Activated CD4-positive, alpha-beta memory T cell treated with anti-CD3 and anti-CD28 coated beads, Interleukin-2, amount 10 ng/mL, durations not matched to agents 7 days and 5 days (primary cell): ENCODE measurements at regions of chr7 and their contacts with region 1.

Region 1: DNA sequence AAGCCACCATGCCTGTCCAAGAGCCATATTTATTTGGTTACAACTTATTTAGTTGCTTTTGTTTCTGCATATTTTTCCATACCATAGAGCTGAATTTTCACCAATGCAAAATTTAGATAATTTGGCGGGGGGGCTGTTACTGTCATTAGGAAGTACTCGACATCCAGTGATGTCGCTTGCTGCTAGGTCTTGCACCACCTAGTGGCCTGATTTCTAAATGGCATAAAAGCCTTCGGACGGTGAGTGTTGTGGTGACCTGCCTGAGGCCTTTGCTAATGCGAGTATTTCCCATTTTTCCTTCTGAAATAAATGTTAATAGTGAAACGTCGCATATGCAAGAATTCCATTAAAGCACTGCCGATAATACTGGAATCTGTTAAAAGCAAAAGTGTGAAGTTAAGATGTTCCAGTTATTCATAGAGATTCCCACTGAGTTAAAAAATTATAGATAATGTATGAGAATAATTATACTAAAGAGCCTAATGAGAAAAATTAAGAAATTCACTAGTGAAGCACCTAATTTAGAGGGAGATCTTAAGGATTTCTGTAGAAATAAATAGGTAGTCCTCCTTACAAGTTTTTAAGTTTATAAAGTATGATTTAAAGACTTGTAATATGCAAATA is 86.1 kb upstream of the DNAJB6 start:
- DNase-seq: peak; percentile 53
- H3K4me3 Mint-ChIP-seq: no peak overlapping the region
- H3K27ac Mint-ChIP-seq: no peak overlapping the region
- H3K4me1 Mint-ChIP-seq: peaks cover 3% of the 10 kb centered on the region
- H3K27me3 Mint-ChIP-seq: no peaks in the 10 kb centered on the region

Region 2: GRCh38 chr7:156668181-156668624 is 582.5 kb before region 1 on chr7:
- CTCF ChIA-PET with region 1: no interaction called
- POLR2A ChIA-PET with region 1: no interaction called
- DNase-seq: no peak
- H3K4me3 Mint-ChIP-seq: no peak overlapping the region
- H3K27ac Mint-ChIP-seq: no peak overlapping the region
- H3K4me1 Mint-ChIP-seq: no peaks in the 10 kb centered on the region
- H3K27me3 Mint-ChIP-seq: no peaks in the 10 kb centered on the region

Region 3: DNA sequence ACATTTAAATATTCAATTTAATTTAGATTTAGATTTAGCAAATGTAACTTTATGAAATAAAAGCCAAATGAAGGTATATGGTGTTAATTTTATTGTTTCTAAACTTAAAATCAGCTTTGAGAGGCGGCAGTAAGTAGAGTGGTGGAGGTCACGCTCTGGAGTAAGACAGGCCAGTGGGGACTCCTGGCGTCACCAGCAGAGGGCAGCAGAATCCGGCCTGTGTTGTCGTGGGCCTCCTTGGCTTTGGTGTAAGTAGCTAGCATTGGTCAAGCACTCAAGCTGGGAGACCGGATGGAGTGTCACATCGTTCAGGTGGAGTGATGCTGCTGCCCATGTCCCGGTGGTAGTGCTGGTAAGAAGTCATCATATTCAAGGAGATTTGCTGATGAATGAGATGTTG is 12.6 kb before region 1 on chr7:
- CTCF ChIA-PET with region 1: interaction called, 22 read pairs
- POLR2A ChIA-PET with region 1: interaction called, 3 read pairs
- DNase-seq: no peak
- H3K4me3 Mint-ChIP-seq: no peak overlapping the region
- H3K27ac Mint-ChIP-seq: no peak overlapping the region
- H3K4me1 Mint-ChIP-seq: peaks cover 9% of the 10 kb centered on the region
- H3K27me3 Mint-ChIP-seq: no peaks in the 10 kb centered on the region

Region 4: DNA sequence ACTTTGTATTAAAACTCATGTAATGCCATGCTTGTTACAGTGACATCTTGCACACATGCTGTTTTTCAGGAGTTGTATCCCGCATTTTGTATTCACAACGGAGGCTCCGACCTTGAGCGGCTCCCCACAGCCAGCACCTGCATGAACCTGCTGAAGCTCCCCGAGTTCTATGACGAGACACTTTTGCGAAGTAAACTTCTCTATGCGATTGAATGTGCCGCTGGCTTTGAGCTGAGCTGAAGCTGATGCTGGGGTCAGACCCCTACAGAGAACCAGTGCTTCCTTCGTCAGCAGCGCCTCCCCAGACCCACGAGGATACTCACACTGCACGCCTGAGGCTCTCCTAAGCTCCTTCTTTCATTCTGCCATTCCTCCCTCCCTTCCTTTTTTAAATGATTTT is 16.8 kb after region 1 on chr7:
- CTCF ChIA-PET with region 1: interaction called, 10 read pairs
- POLR2A ChIA-PET with region 1: interaction called, 3 read pairs
- DNase-seq: no peak
- H3K4me3 Mint-ChIP-seq: no peak overlapping the region
- H3K27ac Mint-ChIP-seq: no peak overlapping the region
- H3K4me1 Mint-ChIP-seq: peaks cover 19% of the 10 kb centered on the region
- H3K27me3 Mint-ChIP-seq: no peaks in the 10 kb centered on the region

Region 5: DNA sequence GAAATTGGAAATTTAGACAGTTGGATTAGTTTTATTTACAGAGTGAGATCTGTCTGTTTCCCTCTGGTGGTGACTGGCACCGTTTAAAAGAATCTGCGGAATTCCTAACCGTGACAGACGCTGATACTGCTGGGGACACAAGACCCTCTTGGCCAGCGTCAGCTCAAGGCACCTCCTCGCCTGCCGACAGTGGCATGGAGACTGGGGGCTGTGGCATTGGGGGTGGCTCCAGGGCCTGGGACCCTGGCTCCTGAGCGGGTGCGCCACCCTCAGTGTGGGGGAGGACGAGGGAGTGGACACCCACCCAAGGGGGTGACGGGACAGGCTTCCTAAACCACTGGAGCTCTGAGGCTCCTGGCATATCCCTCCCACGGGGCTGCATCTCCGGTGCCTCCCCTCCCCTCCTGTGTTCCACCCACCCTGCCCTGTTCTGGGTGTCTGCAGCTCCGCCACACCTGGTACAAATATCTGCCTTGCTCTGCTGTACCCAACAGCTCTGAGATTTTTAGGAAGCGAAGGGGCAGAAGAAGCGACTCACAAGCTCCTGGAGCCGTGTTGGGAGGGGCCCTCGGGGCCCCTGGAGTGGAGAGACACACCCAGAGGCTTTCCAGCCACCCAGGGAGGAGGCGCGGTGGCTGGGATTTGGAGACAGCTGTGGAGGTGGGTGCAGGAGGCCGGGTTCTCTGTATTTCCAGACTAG is 264.8 kb after region 1 on chr7:
- CTCF ChIA-PET with region 1: no interaction called
- POLR2A ChIA-PET with region 1: no interaction called
- DNase-seq: peak; percentile 15
- H3K4me3 Mint-ChIP-seq: no peak overlapping the region
- H3K27ac Mint-ChIP-seq: no peak overlapping the region
- H3K4me1 Mint-ChIP-seq: no peaks in the 10 kb centered on the region
- H3K27me3 Mint-ChIP-seq: peaks cover 28% of the 10 kb centered on the region

Region 6: GRCh38 chr7:157526005-157526912 is 275.5 kb after region 1 on chr7:
- CTCF ChIA-PET with region 1: no interaction called
- POLR2A ChIA-PET with region 1: no interaction called
- DNase-seq: no peak
- H3K4me3 Mint-ChIP-seq: no peak overlapping the region
- H3K27ac Mint-ChIP-seq: no peak overlapping the region
- H3K4me1 Mint-ChIP-seq: no peaks in the 10 kb centered on the region
- H3K27me3 Mint-ChIP-seq: peaks cover 21% of the 10 kb centered on the region